B cell (primary cell): ENCODE measurements at regions of chr6 and their contacts with region 1.

Region 1: GRCh38 chr6:24774696-24775519 is at the start of gene GMNN:
- DNase-seq: peak; percentile 98
- ATAC-seq: peak; percentile 90
- H3K4me3 ChIP-seq: peak within 1 kb of the TSS; percentile 93 to 100 (median 95)
- H3K4me3 Mint-ChIP-seq: peak within 1 kb of the TSS; percentile 99
- H3K27ac ChIP-seq: peak within 1 kb of the TSS; percentile 85 to 94
- H3K27ac Mint-ChIP-seq: peak within 1 kb of the TSS; percentile 97
- H3K4me1 ChIP-seq: peaks cover 14 to 21% of the 10 kb centered on the region in 2 donors
- H3K4me1 Mint-ChIP-seq: peaks cover 26% of the 10 kb centered on the region
- H3K27me3 ChIP-seq: no peaks in the 10 kb centered on the region
- H3K27me3 Mint-ChIP-seq: no peaks in the 10 kb centered on the region
- CTCF ChIP-seq: no peak
- total RNA-seq, gene GMNN: 7.3 and 8.2 TPM in 2 replicates

Region 2: GRCh38 chr6:24646782-24647181 is 128.1 kb before region 1 on chr6:
- CTCF ChIA-PET with region 1: no interaction called
- POLR2A ChIA-PET with region 1: no interaction called
- intact Hi-C with region 1: loop called (anchors 1 kb)
- DNase-seq: no peak
- ATAC-seq: no peak
- H3K4me3 ChIP-seq: no peak overlapping the region
- H3K4me3 Mint-ChIP-seq: peak overlapping the region; percentile 95
- H3K27ac ChIP-seq: peak overlapping the region in 1 of 2 donors; percentile 75
- H3K27ac Mint-ChIP-seq: peak overlapping the region; percentile 98
- H3K4me1 ChIP-seq: peaks cover 10 to 15% of the 10 kb centered on the region in 2 donors
- H3K4me1 Mint-ChIP-seq: peaks cover 27% of the 10 kb centered on the region
- H3K27me3 ChIP-seq: no peaks in the 10 kb centered on the region
- H3K27me3 Mint-ChIP-seq: no peaks in the 10 kb centered on the region
- CTCF ChIP-seq: no peak

Region 3: DNA sequence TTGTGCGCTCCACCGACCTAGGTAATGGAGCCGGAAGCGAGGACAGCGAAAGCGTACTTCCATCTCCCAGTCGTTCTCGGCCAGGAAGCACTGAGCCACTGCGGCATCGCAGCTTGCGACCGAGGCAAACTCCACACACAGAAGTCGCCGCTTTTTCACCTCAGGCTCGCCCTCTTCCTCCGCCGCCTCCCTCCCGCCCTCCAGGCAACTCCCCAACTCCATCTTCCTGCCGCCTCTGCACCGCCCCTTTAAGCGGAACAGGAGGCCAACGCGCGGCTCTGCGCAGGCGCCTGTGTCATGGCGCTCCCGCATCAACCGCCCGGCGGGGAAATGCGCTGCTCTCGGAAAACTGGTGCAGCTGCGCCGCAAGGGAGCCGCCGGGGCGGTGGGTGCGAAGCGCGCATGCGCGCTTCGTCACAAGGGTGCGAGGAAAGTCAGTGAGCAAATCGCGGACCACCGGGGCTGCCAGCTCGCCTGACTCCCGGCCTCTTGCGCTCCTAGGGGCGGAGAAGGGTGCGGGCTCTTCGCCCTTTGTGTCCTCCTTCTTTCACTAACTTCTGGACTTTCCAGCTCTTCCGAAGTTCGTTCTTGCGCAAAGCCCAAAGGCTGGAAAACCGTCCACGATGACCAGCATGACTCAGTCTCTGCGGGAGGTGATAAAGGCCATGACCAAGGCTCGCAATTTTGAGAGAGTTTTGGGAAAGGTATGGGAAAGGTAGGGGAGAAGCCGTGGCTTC is 108.1 kb before region 1 on chr6 and contains the starts of genes ACOT13 and TDP2:
- CTCF ChIA-PET with region 1: no interaction called
- POLR2A ChIA-PET with region 1: no interaction called
- intact Hi-C with region 1: loop called (anchors 1 kb)
- DNase-seq: peak; percentile 98
- ATAC-seq: peak; percentile 94
- H3K4me3 ChIP-seq: peak within 1 kb of the TSS; percentile 74 to 100 (median 96)
- H3K4me3 Mint-ChIP-seq: peak within 1 kb of the TSS; percentile 99
- H3K27ac ChIP-seq: peak within 1 kb of the TSS; percentile 75 to 82
- H3K27ac Mint-ChIP-seq: peak within 1 kb of the TSS; percentile 98
- H3K4me1 ChIP-seq: peaks cover 22 to 23% of the 10 kb centered on the region in 2 donors
- H3K4me1 Mint-ChIP-seq: peaks cover 46% of the 10 kb centered on the region
- H3K27me3 ChIP-seq: no peaks in the 10 kb centered on the region
- H3K27me3 Mint-ChIP-seq: no peaks in the 10 kb centered on the region
- CTCF ChIP-seq: peak; percentile 67
- total RNA-seq, gene ACOT13: 5.7 and 6.6 TPM in 2 replicates
- total RNA-seq, gene TDP2: 63.5 and 68.1 TPM in 2 replicates